ENCODE measurements at regions of chr10 and their contacts with region 1.

Region 1: DNA sequence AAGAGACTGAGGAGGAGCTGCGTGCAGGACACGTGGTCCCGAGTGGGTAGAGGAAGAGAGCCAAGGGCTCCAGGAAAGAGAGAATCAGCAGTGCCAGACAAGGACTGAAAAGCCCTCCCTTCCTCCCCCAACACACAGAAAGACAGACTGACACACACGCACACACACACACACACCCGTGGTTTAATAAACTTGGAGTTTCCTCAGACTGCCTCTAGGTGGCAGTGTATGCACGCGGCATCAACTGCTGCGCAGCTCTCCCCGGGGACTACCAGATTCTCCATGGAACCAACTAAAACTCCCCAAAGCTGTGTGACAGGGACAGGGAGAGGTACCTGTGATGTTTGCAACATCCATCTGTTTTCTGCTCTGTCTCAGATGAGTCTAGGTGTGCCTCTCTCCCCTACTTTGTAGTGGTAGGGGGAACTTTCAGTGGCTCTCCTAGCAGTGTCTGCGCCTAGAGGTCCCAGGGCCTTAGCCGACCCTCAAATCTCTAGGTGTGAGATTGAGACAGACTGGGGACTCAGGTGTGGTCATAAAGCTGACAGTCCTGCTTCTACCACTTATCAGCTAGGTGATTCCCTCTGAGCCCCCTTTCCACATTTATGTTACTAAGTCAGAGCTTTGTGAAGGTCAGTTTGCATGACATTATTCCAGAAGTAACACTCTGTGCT is 9.3 kb upstream of the TSPAN14 start:
- DNase-seq: peak; percentile 62
- ATAC-seq: peak; percentile 89
- H3K4me3 Mint-ChIP-seq: no peak overlapping the region
- H3K27ac Mint-ChIP-seq: peak overlapping the region; percentile 82
- H3K4me1 Mint-ChIP-seq: peaks cover 39% of the 10 kb centered on the region
- H3K27me3 Mint-ChIP-seq: peaks cover 16% of the 10 kb centered on the region

Region 2: GRCh38 chr10:80408242-80409101 is 36.3 kb before region 1 on chr10 and contains the start of gene PRXL2A:
- CTCF ChIA-PET with region 1: interaction called, 32 read pairs
- POLR2A ChIA-PET with region 1: no interaction called
- DNase-seq: peak; percentile 88
- ATAC-seq: peak; percentile 97
- H3K4me3 Mint-ChIP-seq: peak within 1 kb of the TSS; percentile 72
- H3K27ac Mint-ChIP-seq: peak within 1 kb of the TSS; percentile 65
- H3K4me1 Mint-ChIP-seq: peaks cover 26% of the 10 kb centered on the region
- H3K27me3 Mint-ChIP-seq: peaks cover 10% of the 10 kb centered on the region
- total RNA-seq, gene PRXL2A: 14.9 to 15.3 TPM

Region 3: GRCh38 chr10:80459047-80459931 is 14.5 kb after region 1 on chr10:
- CTCF ChIA-PET with region 1: interaction called, 175 read pairs
- POLR2A ChIA-PET with region 1: interaction called, 3 read pairs
- DNase-seq: peak; percentile 90
- ATAC-seq: peak; percentile 63
- H3K4me3 Mint-ChIP-seq: peak overlapping the region; percentile 99
- H3K27ac Mint-ChIP-seq: peak overlapping the region; percentile 90
- H3K4me1 Mint-ChIP-seq: peaks cover 82% of the 10 kb centered on the region
- H3K27me3 Mint-ChIP-seq: no peaks in the 10 kb centered on the region

Region 4: GRCh38 chr10:80493522-80494051 is 48.8 kb after region 1 on chr10:
- CTCF ChIA-PET with region 1: interaction called, 1,113 read pairs
- POLR2A ChIA-PET with region 1: no interaction called
- DNase-seq: no peak
- ATAC-seq: peak; percentile 72
- H3K4me3 Mint-ChIP-seq: peak overlapping the region; percentile 51
- H3K27ac Mint-ChIP-seq: peak overlapping the region; percentile 82
- H3K4me1 Mint-ChIP-seq: peaks cover 99% of the 10 kb centered on the region
- H3K27me3 Mint-ChIP-seq: no peaks in the 10 kb centered on the region

Region 5: GRCh38 chr10:80530251-80530650 is 85.5 kb after region 1 on chr10:
- CTCF ChIA-PET with region 1: interaction called, 18 read pairs
- POLR2A ChIA-PET with region 1: interaction called, 3 read pairs
- DNase-seq: peak; percentile 69
- ATAC-seq: peak; percentile 61
- H3K4me3 Mint-ChIP-seq: peak overlapping the region; percentile 61
- H3K27ac Mint-ChIP-seq: peak overlapping the region; percentile 97
- H3K4me1 Mint-ChIP-seq: peaks cover 76% of the 10 kb centered on the region
- H3K27me3 Mint-ChIP-seq: no peaks in the 10 kb centered on the region

Region 6: DNA sequence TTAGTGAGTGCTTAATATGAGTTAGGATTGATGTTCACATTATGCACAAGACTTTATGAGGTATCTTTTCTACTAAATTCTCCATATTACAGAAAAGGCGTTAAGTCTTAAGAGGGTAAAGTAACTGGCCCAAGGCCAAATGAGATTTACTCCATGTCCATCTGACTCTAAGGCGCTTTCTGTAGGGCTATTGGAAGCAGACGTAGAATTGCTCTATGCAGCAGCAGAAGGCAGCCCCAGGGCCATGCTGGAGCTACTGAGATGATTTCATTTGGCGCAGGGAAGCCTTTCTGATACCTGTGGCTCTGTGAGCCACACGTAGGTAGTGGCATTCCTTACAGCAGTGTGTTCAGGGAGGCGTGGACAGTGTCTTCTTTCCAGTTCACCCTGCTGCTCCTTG is 226.0 kb after region 1 on chr10:
- CTCF ChIA-PET with region 1: no interaction called
- POLR2A ChIA-PET with region 1: no interaction called
- DNase-seq: no peak
- ATAC-seq: no peak
- H3K4me3 Mint-ChIP-seq: no peak overlapping the region
- H3K27ac Mint-ChIP-seq: no peak overlapping the region
- H3K4me1 Mint-ChIP-seq: no peaks in the 10 kb centered on the region
- H3K27me3 Mint-ChIP-seq: peaks cover 2% of the 10 kb centered on the region

Measured in activated CD8-positive, alpha-beta T cell treated with anti-CD3 and anti-CD28 coated beads, Interleukin-2, amount 10 ng/mL, durations not matched to agents 7 days and 5 days (primary cell).